Adrenal gland (tissue), 19 donors: ENCODE measurements at regions of chr12 and their contacts with region 1.

Region 1: GRCh38 chr12:3990501-3991280 is 117.5 kb upstream of the PARP11 start:
- DNase-seq: no peak
- H3K4me3 ChIP-seq: no peak overlapping the region
- H3K27ac ChIP-seq: no peak overlapping the region
- H3K4me1 ChIP-seq: no peaks in the 10 kb centered on the region
- H3K27me3 ChIP-seq: no peaks in the 10 kb centered on the region
- CTCF ChIP-seq: no peak
- POLR2A ChIP-seq: no peak

Region 2: GRCh38 chr12:3869865-3870264 is 120.8 kb before region 1 on chr12:
- intact Hi-C with region 1: no loop called
- DNase-seq: no peak
- H3K4me3 ChIP-seq: peak overlapping the region in 1 of 4 donors; percentile 20
- H3K27ac ChIP-seq: no peak overlapping the region
- H3K4me1 ChIP-seq: peaks cover 9 to 26% of the 10 kb centered on the region in 2 donors
- H3K27me3 ChIP-seq: no peaks in the 10 kb centered on the region
- CTCF ChIP-seq: no peak
- POLR2A ChIP-seq: no peak

Region 3: GRCh38 chr12:3933074-3933818 is 57.4 kb before region 1 on chr12:
- intact Hi-C with region 1: no loop called
- DNase-seq: no peak
- H3K4me3 ChIP-seq: no peak overlapping the region
- H3K27ac ChIP-seq: no peak overlapping the region
- H3K4me1 ChIP-seq: no peaks in the 10 kb centered on the region
- H3K27me3 ChIP-seq: peaks cover 3% of the 10 kb centered on the region
- CTCF ChIP-seq: no peak
- POLR2A ChIP-seq: no peak

Region 4: GRCh38 chr12:4112734-4113325 is 122.1 kb after region 1 on chr12:
- intact Hi-C with region 1: loop called in 1 of 2 experiments (anchors 5 kb)
- DNase-seq: no peak
- H3K4me3 ChIP-seq: no peak overlapping the region
- H3K27ac ChIP-seq: no peak overlapping the region
- H3K4me1 ChIP-seq: no peaks in the 10 kb centered on the region
- H3K27me3 ChIP-seq: no peaks in the 10 kb centered on the region
- CTCF ChIP-seq: no peak
- POLR2A ChIP-seq: no peak